ENCODE measurements at regions of chr6 and their contacts with region 1.

Region 1: GRCh38 chr6:35688581-35689322 is at the start of gene FKBP5:
- DNase-seq: peak; percentile 95
- ATAC-seq: peak; percentile 94
- H3K4me3 Mint-ChIP-seq: peak within 1 kb of the TSS; percentile 91
- H3K27ac Mint-ChIP-seq: peak within 1 kb of the TSS; percentile 91
- H3K4me1 Mint-ChIP-seq: peaks cover 9% of the 10 kb centered on the region
- H3K27me3 Mint-ChIP-seq: no peaks in the 10 kb centered on the region
- CTCF ChIP-seq: no peak
- total RNA-seq, gene FKBP5: 90.6 to 93.4 TPM

Region 2: DNA sequence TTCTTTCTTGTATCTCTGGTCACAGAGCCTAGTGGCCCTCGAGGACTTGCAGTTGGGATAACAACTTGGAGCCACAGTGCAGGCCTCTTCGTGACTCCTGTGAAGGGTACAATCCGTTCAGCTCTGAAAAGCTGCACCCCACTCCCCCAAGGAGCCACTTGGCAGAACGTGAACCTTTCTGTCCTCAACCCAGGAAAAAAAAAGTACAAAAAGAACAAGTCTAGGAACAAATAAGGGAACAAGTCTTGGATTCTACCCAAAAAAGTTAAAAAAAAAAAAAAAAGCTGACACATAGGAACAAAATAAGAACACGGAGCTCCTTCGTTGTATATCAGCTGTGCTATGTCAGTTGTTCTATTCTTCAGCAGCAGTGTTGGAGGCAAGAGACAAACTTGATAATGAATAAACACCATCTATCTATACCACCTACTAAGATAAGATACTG is 98.1 kb before region 1 on chr6:
- CTCF ChIA-PET with region 1: interaction called, 10 read pairs
- POLR2A ChIA-PET with region 1: interaction called, 3 read pairs
- intact Hi-C with region 1: no loop called
- DNase-seq: no peak
- ATAC-seq: no peak
- H3K4me3 Mint-ChIP-seq: no peak overlapping the region
- H3K27ac Mint-ChIP-seq: peak overlapping the region; percentile 49
- H3K4me1 Mint-ChIP-seq: peaks cover 79% of the 10 kb centered on the region
- H3K27me3 Mint-ChIP-seq: no peaks in the 10 kb centered on the region
- CTCF ChIP-seq: no peak

Region 3: DNA sequence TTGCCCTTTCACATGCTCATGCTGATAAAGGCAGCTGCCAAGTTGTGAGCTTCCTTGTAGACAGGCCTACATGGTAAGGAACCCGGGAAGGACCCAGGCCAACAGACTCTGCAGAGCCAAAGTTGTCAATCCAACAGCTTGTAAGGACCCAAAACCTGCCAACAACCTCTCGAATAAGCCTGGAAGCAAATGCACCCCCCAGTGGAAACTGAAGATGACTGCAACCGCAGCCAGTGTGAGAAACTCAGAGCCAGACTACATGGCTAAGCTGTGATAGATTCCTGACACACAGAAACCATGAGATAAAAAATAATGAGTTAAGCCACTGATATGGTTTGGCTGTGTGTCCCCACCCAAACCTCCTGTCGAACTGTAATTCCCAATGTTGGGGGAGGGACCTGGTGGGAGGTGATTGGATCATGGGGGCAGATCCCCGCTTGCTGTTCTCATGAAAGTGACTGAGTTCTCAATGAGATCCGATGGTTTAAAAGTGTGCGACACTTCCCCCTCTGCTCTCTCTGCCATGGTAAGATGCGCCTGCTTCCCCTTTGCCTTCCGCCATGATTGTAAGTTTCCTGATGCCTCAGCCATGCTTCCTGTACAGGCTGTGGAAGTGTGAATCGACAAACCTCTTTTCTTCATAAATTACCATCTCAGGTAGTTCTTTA is 68.8 kb after region 1 on chr6:
- CTCF ChIA-PET with region 1: no interaction called
- POLR2A ChIA-PET with region 1: no interaction called
- intact Hi-C with region 1: no loop called
- DNase-seq: peak; percentile 32
- ATAC-seq: peak; percentile 42
- H3K4me3 Mint-ChIP-seq: no peak overlapping the region
- H3K27ac Mint-ChIP-seq: no peak overlapping the region
- H3K4me1 Mint-ChIP-seq: no peaks in the 10 kb centered on the region
- H3K27me3 Mint-ChIP-seq: peaks cover 19% of the 10 kb centered on the region
- CTCF ChIP-seq: peak; percentile 41

Measured in activated CD8-positive, alpha-beta T cell treated with anti-CD3 and anti-CD28 coated beads for 36 hours (primary cell).